ENCODE measurements at regions of chr22 and their contacts with region 1.

Region 1: GRCh38 chr22:41285820-41286638 is at the start of gene RANGAP1:
- DNase-seq: peak; percentile 93
- ATAC-seq: peak; percentile 97
- H3K4me3 Mint-ChIP-seq: peak within 1 kb of the TSS; percentile 94
- H3K27ac Mint-ChIP-seq: peak within 1 kb of the TSS; percentile 98
- H3K4me1 Mint-ChIP-seq: peaks cover 28% of the 10 kb centered on the region
- H3K27me3 Mint-ChIP-seq: no peaks in the 10 kb centered on the region
- CTCF ChIP-seq: no peak
- total RNA-seq, gene RANGAP1: 48.9 and 56.4 TPM in 2 replicates

Region 2: GRCh38 chr22:41070665-41071331 is 215.2 kb before region 1 on chr22:
- CTCF ChIA-PET with region 1: no interaction called
- POLR2A ChIA-PET with region 1: interaction called, 21 read pairs
- intact Hi-C with region 1: no loop called
- DNase-seq: no peak
- ATAC-seq: no peak
- H3K4me3 Mint-ChIP-seq: no peak overlapping the region
- H3K27ac Mint-ChIP-seq: no peak overlapping the region
- H3K4me1 Mint-ChIP-seq: peaks cover 33% of the 10 kb centered on the region
- H3K27me3 Mint-ChIP-seq: no peaks in the 10 kb centered on the region
- CTCF ChIP-seq: no peak

Region 3: DNA sequence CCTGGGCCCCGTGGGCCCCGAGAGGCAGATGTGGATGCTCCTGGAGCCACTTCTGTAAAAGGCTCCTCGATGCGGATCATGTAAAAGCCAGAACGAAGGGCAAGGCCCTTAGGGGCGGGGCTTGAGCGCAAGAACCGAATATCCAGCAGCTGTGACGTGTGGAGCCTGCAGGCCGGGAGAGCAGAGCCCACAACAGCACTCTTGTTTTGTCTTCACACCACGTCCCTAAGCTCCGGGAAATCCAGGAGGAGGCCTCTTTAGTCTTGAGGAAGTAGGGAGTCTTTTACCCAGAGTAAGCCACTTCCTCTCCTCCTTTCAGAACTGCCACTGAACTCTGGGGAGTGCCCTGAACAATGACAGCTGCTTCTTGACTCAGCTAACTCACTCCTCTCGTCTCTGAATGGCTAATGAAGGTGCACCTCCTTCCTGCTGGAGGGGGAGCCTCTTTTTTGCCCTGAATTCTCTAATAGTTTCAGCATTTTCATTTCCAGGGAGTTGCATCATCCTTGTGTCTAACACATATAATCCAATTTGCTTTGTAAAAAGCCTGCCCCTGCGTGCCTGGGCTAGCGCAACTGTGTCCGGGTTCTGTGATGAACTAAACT is 68.4 kb before region 1 on chr22:
- CTCF ChIA-PET with region 1: no interaction called
- POLR2A ChIA-PET with region 1: no interaction called
- intact Hi-C with region 1: no loop called
- DNase-seq: peak; percentile 29
- ATAC-seq: peak; percentile 88
- H3K4me3 Mint-ChIP-seq: peak overlapping the region; percentile 68
- H3K27ac Mint-ChIP-seq: peak overlapping the region; percentile 69
- H3K4me1 Mint-ChIP-seq: peaks cover 12% of the 10 kb centered on the region
- H3K27me3 Mint-ChIP-seq: no peaks in the 10 kb centered on the region
- CTCF ChIP-seq: no peak

Region 4: GRCh38 chr22:41237707-41238569 is 48.1 kb before region 1 on chr22:
- CTCF ChIA-PET with region 1: no interaction called
- POLR2A ChIA-PET with region 1: interaction called, 3 read pairs
- intact Hi-C with region 1: loop called (anchors 1 kb)
- DNase-seq: peak; percentile 78
- ATAC-seq: peak; percentile 97
- H3K4me3 Mint-ChIP-seq: peak overlapping the region; percentile 64
- H3K27ac Mint-ChIP-seq: no peak overlapping the region
- H3K4me1 Mint-ChIP-seq: peaks cover 8% of the 10 kb centered on the region
- H3K27me3 Mint-ChIP-seq: no peaks in the 10 kb centered on the region
- CTCF ChIP-seq: no peak

Region 5: DNA sequence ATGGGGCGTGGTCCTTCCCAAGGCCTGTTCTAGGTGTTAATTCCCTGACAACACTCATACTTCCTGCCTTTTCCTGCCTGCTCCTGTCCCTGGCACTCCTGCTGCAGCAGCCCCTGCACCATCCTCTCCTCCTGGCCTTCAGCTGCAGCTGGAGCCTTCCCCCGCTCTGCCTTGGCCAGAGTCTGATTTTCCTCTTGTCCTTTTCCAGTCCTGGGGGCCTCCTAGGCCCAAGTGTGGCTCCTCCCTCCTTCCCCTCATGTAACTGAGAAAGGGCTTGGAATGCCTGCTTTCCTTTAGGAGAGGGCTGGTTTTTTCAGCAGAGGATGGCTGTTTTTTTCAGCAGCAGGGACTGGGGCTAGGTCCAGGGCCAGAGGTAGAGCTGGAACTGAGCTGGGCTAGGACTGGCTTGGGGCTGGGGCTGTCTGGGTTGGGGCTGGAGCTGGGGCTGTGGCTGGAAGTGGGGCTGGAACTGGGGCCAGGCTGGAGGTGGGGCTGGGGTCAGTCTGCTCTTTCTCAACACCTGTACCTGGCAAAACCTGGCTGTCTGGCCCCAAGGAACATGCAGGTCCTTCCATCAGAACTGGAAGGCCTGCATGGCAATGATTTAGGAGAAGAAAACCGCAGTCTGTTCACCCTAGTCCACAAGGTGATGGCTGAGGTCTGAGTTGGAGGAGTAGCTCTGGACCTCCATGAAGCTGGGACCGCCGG is 38.9 kb after region 1 on chr22:
- CTCF ChIA-PET with region 1: no interaction called
- POLR2A ChIA-PET with region 1: no interaction called
- intact Hi-C with region 1: no loop called
- DNase-seq: no peak
- ATAC-seq: no peak
- H3K4me3 Mint-ChIP-seq: no peak overlapping the region
- H3K27ac Mint-ChIP-seq: no peak overlapping the region
- H3K4me1 Mint-ChIP-seq: no peaks in the 10 kb centered on the region
- H3K27me3 Mint-ChIP-seq: no peaks in the 10 kb centered on the region
- CTCF ChIP-seq: no peak

Region 6: DNA sequence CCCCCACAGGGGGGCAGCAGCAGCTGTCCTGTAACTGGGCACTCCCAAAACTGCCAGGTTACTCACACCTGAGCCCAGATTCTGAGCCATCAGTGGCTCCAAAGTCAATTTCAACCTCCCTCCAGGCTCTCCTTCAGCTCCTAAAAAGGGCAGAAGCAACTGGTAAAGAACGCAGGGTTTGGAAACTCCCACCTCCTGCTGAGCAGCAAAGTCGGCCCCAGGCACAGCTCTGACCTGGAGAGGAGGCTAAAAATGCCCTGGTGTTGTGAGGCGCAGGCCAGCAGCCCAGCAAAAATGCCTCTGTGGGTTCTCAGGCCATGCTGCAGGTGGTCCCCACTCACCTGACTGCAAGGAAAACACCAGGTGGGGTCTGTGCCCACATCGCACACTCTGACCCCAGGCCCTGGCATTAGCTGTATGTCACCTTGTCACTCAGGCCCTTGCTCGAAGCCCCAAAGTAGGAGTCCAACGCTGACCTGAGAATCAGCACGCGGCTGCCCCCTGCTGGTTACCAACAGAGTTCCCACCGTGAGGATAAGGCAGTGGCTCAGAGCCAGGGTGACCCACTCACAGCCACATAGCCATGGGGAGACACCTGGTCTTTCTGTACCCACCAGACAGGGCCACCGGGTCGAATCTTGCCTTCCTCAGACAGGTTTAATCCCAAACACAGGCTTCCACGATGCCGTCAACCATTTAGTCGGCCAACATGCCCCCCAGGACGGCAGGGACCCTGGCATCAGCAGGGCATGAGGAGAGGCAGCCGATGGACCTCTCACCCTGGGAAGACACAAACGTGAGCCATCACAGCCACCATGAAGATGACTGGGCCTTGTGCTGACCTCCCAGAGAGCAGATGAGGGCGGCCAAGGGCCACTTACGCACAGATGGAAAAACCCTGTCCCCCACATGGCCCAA is 247.1 kb after region 1 on chr22:
- CTCF ChIA-PET with region 1: no interaction called
- POLR2A ChIA-PET with region 1: no interaction called
- intact Hi-C with region 1: loop called (anchors 2 kb)
- DNase-seq: peak; percentile 64
- ATAC-seq: peak; percentile 86
- H3K4me3 Mint-ChIP-seq: no peak overlapping the region
- H3K27ac Mint-ChIP-seq: no peak overlapping the region
- H3K4me1 Mint-ChIP-seq: no peaks in the 10 kb centered on the region
- H3K27me3 Mint-ChIP-seq: no peaks in the 10 kb centered on the region
- CTCF ChIP-seq: peak; percentile 23

Region 7: GRCh38 chr22:41621099-41621910 is 335.3 kb after region 1 on chr22 and contains the start of gene XRCC6:
- CTCF ChIA-PET with region 1: no interaction called
- POLR2A ChIA-PET with region 1: interaction called, 4 read pairs
- intact Hi-C with region 1: loop called (anchors 2 kb)
- DNase-seq: peak; percentile 99
- ATAC-seq: peak; percentile 92
- H3K4me3 Mint-ChIP-seq: peak within 1 kb of the TSS; percentile 98
- H3K27ac Mint-ChIP-seq: peak within 1 kb of the TSS; percentile 98
- H3K4me1 Mint-ChIP-seq: peaks cover 38% of the 10 kb centered on the region
- H3K27me3 Mint-ChIP-seq: no peaks in the 10 kb centered on the region
- CTCF ChIP-seq: no peak
- total RNA-seq, gene XRCC6: 297 and 319 TPM in 2 replicates